ENCODE measurements at regions of chr10 and their contacts with region 1.

Region 1: DNA sequence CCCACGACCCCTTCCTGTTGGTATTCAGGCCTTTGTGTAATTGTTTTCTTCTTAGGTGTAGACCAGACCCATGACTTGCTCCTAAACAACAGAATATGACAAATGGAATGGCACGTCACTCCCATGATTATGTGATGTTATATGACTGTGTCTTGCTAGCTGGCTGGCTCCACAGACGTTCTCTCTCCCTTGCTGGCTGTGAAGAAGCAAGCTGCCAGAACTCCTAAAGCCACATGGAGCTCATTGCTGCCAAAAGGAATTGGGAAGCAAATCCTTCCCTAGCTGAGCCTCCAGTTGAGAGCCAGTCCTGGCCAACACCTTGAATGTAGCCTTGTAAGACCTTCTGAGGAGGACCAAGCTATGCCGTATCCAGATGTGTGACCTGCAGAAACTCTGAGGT is 74.2 kb downstream of the RAB18 start:
- DNase-seq: no peak
- H3K4me3 ChIP-seq: no peak overlapping the region
- H3K27ac ChIP-seq: no peak overlapping the region
- H3K4me1 ChIP-seq: no peaks in the 10 kb centered on the region
- H3K27me3 ChIP-seq: no peaks in the 10 kb centered on the region
- CTCF ChIP-seq: no peak

Region 2: DNA sequence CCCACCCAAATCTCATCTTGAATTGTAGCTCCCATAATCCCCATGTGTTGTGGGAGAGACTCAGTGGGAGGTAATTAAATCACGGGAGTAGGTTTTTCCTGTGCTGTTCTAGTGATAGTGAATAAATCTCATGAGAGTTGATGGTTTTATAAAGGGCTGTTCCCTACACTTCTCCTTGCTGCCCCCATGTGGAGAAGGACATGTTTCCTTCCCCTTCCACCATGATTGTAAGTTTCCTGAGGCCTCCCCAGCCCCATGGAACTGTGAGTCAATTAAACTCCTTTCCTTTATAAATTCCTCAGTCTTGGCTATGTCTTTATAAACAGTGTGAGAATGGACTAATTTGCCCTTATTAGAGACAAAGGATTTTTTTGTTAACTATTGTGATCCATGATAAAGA is 215.8 kb after region 1 on chr10:
- CTCF ChIA-PET with region 1: no interaction called
- POLR2A ChIA-PET with region 1: no interaction called
- intact Hi-C with region 1: no loop called
- DNase-seq: peak; percentile 25
- H3K4me3 ChIP-seq: no peak overlapping the region
- H3K27ac ChIP-seq: no peak overlapping the region
- H3K4me1 ChIP-seq: no peaks in the 10 kb centered on the region
- H3K27me3 ChIP-seq: peaks cover 5% of the 10 kb centered on the region
- CTCF ChIP-seq: peak; percentile 27; the same call in 1 of the 2 replicates

Region 3: DNA sequence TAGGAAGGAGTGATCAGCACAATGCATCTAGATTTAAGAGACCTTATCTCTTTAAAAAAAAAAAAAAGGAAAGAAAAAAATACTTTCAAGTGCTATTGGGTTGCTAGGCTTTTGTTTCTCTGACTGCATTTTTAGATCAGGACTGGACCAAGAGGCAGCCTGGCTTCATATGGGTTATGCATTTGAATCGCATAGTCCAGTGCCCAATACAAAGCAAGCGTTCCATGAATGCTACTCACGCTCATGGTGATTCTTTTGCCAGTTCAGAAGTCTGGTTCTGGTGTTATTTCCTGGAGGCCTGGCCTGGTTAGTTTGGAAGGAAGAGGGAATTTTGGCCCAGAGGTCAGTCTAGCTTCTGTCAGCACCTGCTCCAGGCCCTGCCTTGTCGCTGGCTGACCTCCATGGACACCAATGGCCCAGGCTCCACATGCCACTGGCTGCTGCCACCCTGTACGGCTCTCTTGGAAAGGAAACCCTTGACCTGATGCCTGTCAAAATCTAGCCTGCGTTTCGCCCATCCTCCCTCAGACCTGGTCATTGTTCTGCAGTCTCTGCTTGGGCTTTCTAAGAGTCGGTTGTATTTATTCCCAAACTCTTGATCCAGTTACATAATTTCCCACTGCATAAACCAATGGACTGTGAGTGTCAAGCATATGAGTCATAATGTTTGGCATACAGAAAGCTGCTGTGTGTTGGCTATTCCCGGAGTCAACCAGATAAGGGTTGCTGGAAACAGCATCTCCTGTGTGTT is 241.6 kb after region 1 on chr10:
- CTCF ChIA-PET with region 1: no interaction called
- POLR2A ChIA-PET with region 1: interaction called, 12 read pairs
- intact Hi-C with region 1: no loop called
- DNase-seq: no peak
- H3K4me3 ChIP-seq: no peak overlapping the region
- H3K27ac ChIP-seq: no peak overlapping the region
- H3K4me1 ChIP-seq: no peaks in the 10 kb centered on the region
- H3K27me3 ChIP-seq: no peaks in the 10 kb centered on the region
- CTCF ChIP-seq: no peak

Region 4: DNA sequence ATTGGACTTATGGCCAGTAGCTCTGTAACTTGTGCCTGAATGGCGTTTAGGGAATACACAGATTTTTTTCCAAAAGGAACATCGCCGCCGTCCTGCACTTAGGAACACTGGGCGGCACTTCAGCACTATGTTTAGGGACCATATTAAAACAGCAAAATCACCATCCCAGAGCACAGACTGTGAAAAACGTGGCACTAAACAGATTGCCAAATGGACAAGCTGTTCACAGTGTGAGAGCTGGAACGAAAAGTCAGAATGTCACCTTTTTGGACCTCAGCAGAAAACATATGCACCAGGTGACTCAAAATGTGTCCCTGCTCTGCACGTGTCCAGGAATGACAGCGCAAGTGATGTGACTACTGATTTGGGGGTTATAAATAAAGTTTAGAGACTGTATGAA is 332.7 kb after region 1 on chr10:
- CTCF ChIA-PET with region 1: no interaction called
- POLR2A ChIA-PET with region 1: no interaction called
- intact Hi-C with region 1: no loop called
- DNase-seq: no peak
- H3K4me3 ChIP-seq: no peak overlapping the region
- H3K27ac ChIP-seq: no peak overlapping the region
- H3K4me1 ChIP-seq: no peaks in the 10 kb centered on the region
- H3K27me3 ChIP-seq: no peaks in the 10 kb centered on the region
- CTCF ChIP-seq: no peak